Mammary epithelial cell (primary cell): ENCODE measurements at regions of chr4 and their contacts with region 1.

Region 1: DNA sequence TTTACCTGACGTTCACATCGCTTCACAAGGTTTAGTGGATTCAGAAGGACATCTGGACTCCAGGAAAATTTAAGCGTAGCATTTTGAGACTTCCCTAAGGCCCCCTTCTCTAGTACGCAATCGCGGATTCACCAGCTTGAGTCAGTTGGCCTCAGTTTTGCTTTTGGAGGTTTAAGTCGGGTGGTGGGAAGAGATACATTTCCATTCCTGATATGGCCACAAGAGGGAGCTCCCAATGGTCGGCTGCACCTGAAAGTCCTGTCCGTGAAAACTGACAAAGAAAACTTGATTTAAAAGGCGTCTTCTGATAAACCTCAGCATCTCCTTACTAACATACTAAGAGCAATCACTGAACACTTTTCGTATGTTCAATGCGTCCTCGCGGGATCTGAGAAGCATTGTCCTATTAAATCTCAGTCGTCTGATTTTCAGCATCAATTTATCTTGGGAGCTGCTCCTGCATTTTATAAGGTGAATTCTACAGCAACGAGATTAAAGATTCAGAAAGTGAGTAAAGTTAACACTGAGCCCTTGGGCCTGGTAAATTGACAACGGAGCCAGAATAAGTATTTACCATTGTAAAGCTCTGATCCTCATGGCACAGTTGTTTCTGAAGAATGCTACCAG is 50.6 kb downstream of the LGI2 start:
- DNase-seq: peak; percentile 49
- H3K4me3 ChIP-seq: no peak overlapping the region
- H3K27ac ChIP-seq: no peak overlapping the region
- H3K4me1 ChIP-seq: no peaks in the 10 kb centered on the region
- H3K27me3 ChIP-seq: peaks cover 2% of the 10 kb centered on the region
- CTCF ChIP-seq: peak; percentile 74 to 90

Region 2: GRCh38 chr4:25144870-25145481 is 164.8 kb after region 1 on chr4:
- CTCF ChIA-PET with region 1: interaction called, 5 read pairs
- dilution Hi-C with region 1: no loop called
- in situ Hi-C with region 1: no loop called
- intact Hi-C with region 1: loop called (anchors 5 kb)
- DNase-seq: no peak
- H3K4me3 ChIP-seq: no peak overlapping the region
- H3K27ac ChIP-seq: no peak overlapping the region
- H3K4me1 ChIP-seq: no peaks in the 10 kb centered on the region
- H3K27me3 ChIP-seq: no peaks in the 10 kb centered on the region
- CTCF ChIP-seq: peak; percentile 54 to 67

Region 3: GRCh38 chr4:25367004-25367621 is 386.9 kb after region 1 on chr4:
- CTCF ChIA-PET with region 1: no interaction called
- dilution Hi-C with region 1: no loop called
- in situ Hi-C with region 1: loop called in 1 of 2 experiments (anchors 25 kb)
- intact Hi-C with region 1: loop called (anchors 2 kb)
- DNase-seq: peak; percentile 9
- H3K4me3 ChIP-seq: no peak overlapping the region
- H3K27ac ChIP-seq: no peak overlapping the region
- H3K4me1 ChIP-seq: no peaks in the 10 kb centered on the region
- H3K27me3 ChIP-seq: no peaks in the 10 kb centered on the region
- CTCF ChIP-seq: peak; percentile 59 to 62